MCF 10A (cell line): ENCODE measurements at regions of chr7 and their contacts with region 1.

Region 1: GRCh38 chr7:43834463-43835251 is 34.7 kb downstream of the MRPS24 start:
- DNase-seq: peak; percentile 18
- H3K4me3 Mint-ChIP-seq: no peak overlapping the region
- H3K27ac Mint-ChIP-seq: no peak overlapping the region
- H3K4me1 Mint-ChIP-seq: no peaks in the 10 kb centered on the region
- H3K27me3 Mint-ChIP-seq: peaks cover under 1% of the 10 kb centered on the region
- CTCF ChIP-seq: no peak

Region 2: DNA sequence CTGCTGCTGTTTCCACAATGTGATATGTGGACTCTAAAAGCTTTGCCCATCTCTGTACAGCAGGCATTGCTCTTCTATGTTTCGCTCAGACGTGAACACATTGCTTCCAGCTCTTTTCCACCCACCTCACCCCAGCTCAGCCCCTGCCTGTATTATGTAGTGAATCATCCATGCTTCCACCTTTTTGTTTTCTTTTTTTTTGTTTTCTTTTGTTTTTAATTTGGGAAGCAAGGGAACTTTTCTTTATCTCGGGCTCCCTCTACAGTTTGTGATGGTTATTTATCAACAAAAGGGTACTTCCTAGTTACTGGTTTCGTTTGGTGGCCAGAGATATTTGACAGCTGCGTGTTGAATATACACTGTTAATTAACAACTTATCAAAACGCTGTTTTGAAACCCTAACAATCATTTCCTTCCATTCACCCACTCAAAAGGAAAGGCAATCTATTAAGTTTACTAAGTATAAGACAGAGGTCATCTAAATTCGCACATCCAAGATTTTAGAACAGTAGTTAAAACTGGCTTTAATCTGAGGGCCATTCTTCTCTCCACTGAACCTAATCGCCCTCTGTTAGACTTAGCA is 379.6 kb before region 1 on chr7:
- CTCF ChIA-PET with region 1: interaction called, 3 read pairs
- POLR2A ChIA-PET with region 1: no interaction called
- intact Hi-C with region 1: loop called (anchors 10 kb)
- DNase-seq: peak; percentile 71
- H3K4me3 Mint-ChIP-seq: no peak overlapping the region
- H3K27ac Mint-ChIP-seq: no peak overlapping the region
- H3K4me1 Mint-ChIP-seq: peaks cover 6% of the 10 kb centered on the region
- H3K27me3 Mint-ChIP-seq: no peaks in the 10 kb centered on the region
- CTCF ChIP-seq: peak; percentile 48

Region 3: GRCh38 chr7:43721193-43721806 is 113.4 kb before region 1 on chr7:
- CTCF ChIA-PET with region 1: interaction called, 39 read pairs
- POLR2A ChIA-PET with region 1: interaction called, 5 read pairs
- intact Hi-C with region 1: loop called (anchors 2 kb)
- DNase-seq: peak; percentile 70
- H3K4me3 Mint-ChIP-seq: no peak overlapping the region
- H3K27ac Mint-ChIP-seq: no peak overlapping the region
- H3K4me1 Mint-ChIP-seq: peaks cover 15% of the 10 kb centered on the region
- H3K27me3 Mint-ChIP-seq: no peaks in the 10 kb centered on the region
- CTCF ChIP-seq: peak; percentile 49

Region 4: GRCh38 chr7:43799589-43799988 is 35.1 kb before region 1 on chr7:
- CTCF ChIA-PET with region 1: interaction called, 19 read pairs
- POLR2A ChIA-PET with region 1: no interaction called
- intact Hi-C with region 1: no loop called
- DNase-seq: peak; percentile 54
- H3K4me3 Mint-ChIP-seq: no peak overlapping the region
- H3K27ac Mint-ChIP-seq: peak overlapping the region; percentile 76
- H3K4me1 Mint-ChIP-seq: no peaks in the 10 kb centered on the region
- H3K27me3 Mint-ChIP-seq: no peaks in the 10 kb centered on the region
- CTCF ChIP-seq: no peak

Region 5: GRCh38 chr7:43931346-43931745 is 96.7 kb after region 1 on chr7:
- CTCF ChIA-PET with region 1: no interaction called
- POLR2A ChIA-PET with region 1: no interaction called
- intact Hi-C with region 1: no loop called
- DNase-seq: no peak
- H3K4me3 Mint-ChIP-seq: no peak overlapping the region
- H3K27ac Mint-ChIP-seq: no peak overlapping the region
- H3K4me1 Mint-ChIP-seq: peaks cover 5% of the 10 kb centered on the region
- H3K27me3 Mint-ChIP-seq: no peaks in the 10 kb centered on the region
- CTCF ChIP-seq: no peak

Region 6: DNA sequence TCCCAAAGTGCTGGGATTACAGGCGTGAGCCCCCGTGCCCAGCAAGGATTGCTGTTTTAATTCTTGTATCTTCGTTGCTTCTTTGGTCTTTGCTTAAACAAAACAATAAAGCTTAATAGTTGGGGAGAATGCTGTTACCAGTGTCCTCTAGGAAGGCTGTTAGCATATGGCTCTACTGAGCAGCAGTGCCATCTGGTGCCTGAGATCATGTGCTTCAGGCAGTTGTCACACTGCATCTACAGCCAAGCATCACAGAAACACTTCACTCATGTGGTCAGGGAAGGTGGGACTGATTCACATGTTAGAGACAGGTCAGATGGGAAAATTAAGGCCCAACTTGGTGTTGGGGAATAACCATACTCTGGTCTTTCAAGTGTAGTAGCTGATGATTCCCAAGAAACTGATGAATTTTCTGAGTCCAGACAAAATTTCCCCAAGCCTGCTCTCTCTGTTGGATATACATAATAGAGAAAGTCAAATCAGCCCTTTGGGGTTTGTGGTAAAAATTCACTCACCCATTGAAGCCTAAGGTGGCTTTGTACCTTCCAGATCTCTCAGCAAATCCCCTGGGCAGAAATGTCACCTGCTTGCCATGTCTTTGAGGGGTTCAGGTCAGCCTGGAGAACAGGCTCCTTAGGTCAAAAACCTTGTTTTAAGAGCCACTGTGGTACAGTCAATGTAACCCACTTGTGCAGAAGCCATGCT is 120.0 kb after region 1 on chr7:
- CTCF ChIA-PET with region 1: interaction called, 4 read pairs
- POLR2A ChIA-PET with region 1: no interaction called
- intact Hi-C with region 1: loop called (anchors 1 kb)
- DNase-seq: peak; percentile 62
- H3K4me3 Mint-ChIP-seq: no peak overlapping the region
- H3K27ac Mint-ChIP-seq: no peak overlapping the region
- H3K4me1 Mint-ChIP-seq: no peaks in the 10 kb centered on the region
- H3K27me3 Mint-ChIP-seq: no peaks in the 10 kb centered on the region
- CTCF ChIP-seq: peak; percentile 54

Region 7: GRCh38 chr7:45451342-45452035 is 1616.8 kb after region 1 on chr7:
- CTCF ChIA-PET with region 1: no interaction called
- POLR2A ChIA-PET with region 1: no interaction called
- intact Hi-C with region 1: no loop called
- DNase-seq: peak; percentile 17
- H3K4me3 Mint-ChIP-seq: no peak overlapping the region
- H3K27ac Mint-ChIP-seq: no peak overlapping the region
- H3K4me1 Mint-ChIP-seq: peaks cover 26% of the 10 kb centered on the region
- H3K27me3 Mint-ChIP-seq: no peaks in the 10 kb centered on the region
- CTCF ChIP-seq: no peak